ENCODE measurements at regions of chr10 and their contacts with region 1.

Region 1: GRCh38 chr10:101441541-101442455 is 87.8 kb downstream of the BTRC start:
- DNase-seq: no peak
- H3K4me3 Mint-ChIP-seq: no peak overlapping the region
- H3K27ac Mint-ChIP-seq: no peak overlapping the region
- H3K4me1 Mint-ChIP-seq: peaks cover 7% of the 10 kb centered on the region
- H3K27me3 Mint-ChIP-seq: no peaks in the 10 kb centered on the region

Region 2: GRCh38 chr10:101272229-101272868 is 169.4 kb before region 1 on chr10:
- CTCF ChIA-PET with region 1: interaction called, 11 read pairs
- POLR2A ChIA-PET with region 1: no interaction called
- DNase-seq: peak; percentile 66
- H3K4me3 Mint-ChIP-seq: no peak overlapping the region
- H3K27ac Mint-ChIP-seq: no peak overlapping the region
- H3K4me1 Mint-ChIP-seq: no peaks in the 10 kb centered on the region
- H3K27me3 Mint-ChIP-seq: peaks cover 24% of the 10 kb centered on the region

Region 3: GRCh38 chr10:101453791-101454718 is 12.3 kb after region 1 on chr10:
- CTCF ChIA-PET with region 1: interaction called, 16 read pairs
- POLR2A ChIA-PET with region 1: no interaction called
- DNase-seq: no peak
- H3K4me3 Mint-ChIP-seq: peak overlapping the region; percentile 0
- H3K27ac Mint-ChIP-seq: peak overlapping the region; percentile 26
- H3K4me1 Mint-ChIP-seq: peaks cover 22% of the 10 kb centered on the region
- H3K27me3 Mint-ChIP-seq: peaks cover 26% of the 10 kb centered on the region

Region 4: DNA sequence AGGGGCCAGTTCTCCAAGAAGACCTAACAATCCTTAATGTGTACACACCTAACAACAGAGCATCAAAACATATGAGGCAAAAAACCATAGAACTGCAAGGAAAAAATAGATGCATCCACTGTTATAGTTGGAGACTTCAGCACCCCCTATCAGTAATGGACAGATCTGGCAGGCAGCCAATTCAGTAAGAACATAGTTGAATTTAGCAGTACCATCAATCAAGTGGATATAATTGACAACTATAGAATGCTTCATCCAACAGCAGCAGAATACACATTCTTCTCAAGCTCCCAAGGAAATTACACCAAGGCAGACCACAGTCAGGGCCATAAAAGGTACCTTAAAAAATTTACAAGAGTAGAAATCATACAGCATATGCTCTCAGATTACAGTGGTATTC is 104.1 kb after region 1 on chr10:
- CTCF ChIA-PET with region 1: no interaction called
- POLR2A ChIA-PET with region 1: no interaction called
- DNase-seq: no peak
- H3K4me3 Mint-ChIP-seq: no peak overlapping the region
- H3K27ac Mint-ChIP-seq: no peak overlapping the region
- H3K4me1 Mint-ChIP-seq: peaks cover 6% of the 10 kb centered on the region
- H3K27me3 Mint-ChIP-seq: no peaks in the 10 kb centered on the region

Region 5: GRCh38 chr10:101644002-101644401 is 202.2 kb after region 1 on chr10:
- CTCF ChIA-PET with region 1: no interaction called
- POLR2A ChIA-PET with region 1: no interaction called
- DNase-seq: no peak
- H3K4me3 Mint-ChIP-seq: no peak overlapping the region
- H3K27ac Mint-ChIP-seq: no peak overlapping the region
- H3K4me1 Mint-ChIP-seq: no peaks in the 10 kb centered on the region
- H3K27me3 Mint-ChIP-seq: no peaks in the 10 kb centered on the region